Caco-2 (cell line): ENCODE measurements at regions of chr17 and their contacts with region 1.

Region 1: GRCh38 chr17:49861150-49861892 is 13.5 kb upstream of the TAC4 start:
- DNase-seq: peak; percentile 91 to 95
- H3K4me3 ChIP-seq: no peak overlapping the region
- H3K4me3 Mint-ChIP-seq: no peak overlapping the region
- H3K27ac Mint-ChIP-seq: no peak overlapping the region
- H3K4me1 ChIP-seq: peaks cover 26% of the 10 kb centered on the region
- H3K4me1 Mint-ChIP-seq: peaks cover 20% of the 10 kb centered on the region
- H3K27me3 ChIP-seq: no peaks in the 10 kb centered on the region
- H3K27me3 Mint-ChIP-seq: no peaks in the 10 kb centered on the region
- CTCF ChIP-seq: peak; percentile 99 to 100

Region 2: GRCh38 chr17:49637050-49637449 is 224.3 kb before region 1 on chr17:
- CTCF ChIA-PET with region 1: no interaction called
- POLR2A ChIA-PET with region 1: no interaction called
- intact Hi-C with region 1: no loop called
- DNase-seq: no peak
- H3K4me3 ChIP-seq: no peak overlapping the region
- H3K4me3 Mint-ChIP-seq: no peak overlapping the region
- H3K27ac Mint-ChIP-seq: no peak overlapping the region
- H3K4me1 ChIP-seq: peaks cover 5% of the 10 kb centered on the region; the same call in 1 of the 2 replicates
- H3K4me1 Mint-ChIP-seq: peaks cover under 1% of the 10 kb centered on the region
- H3K27me3 ChIP-seq: no peaks in the 10 kb centered on the region
- H3K27me3 Mint-ChIP-seq: no peaks in the 10 kb centered on the region
- CTCF ChIP-seq: no peak

Region 3: GRCh38 chr17:49880291-49881053 is 19.2 kb after region 1 on chr17:
- CTCF ChIA-PET with region 1: interaction called, 14 read pairs
- POLR2A ChIA-PET with region 1: interaction called, 6 read pairs
- intact Hi-C with region 1: loop called (anchors 1 kb)
- DNase-seq: peak; percentile 98 to 100
- H3K4me3 ChIP-seq: peak overlapping the region; percentile 4; the same call in 1 of the 2 replicates
- H3K4me3 Mint-ChIP-seq: peak overlapping the region; percentile 63
- H3K27ac Mint-ChIP-seq: peak overlapping the region; percentile 83
- H3K4me1 ChIP-seq: peaks cover 57% of the 10 kb centered on the region
- H3K4me1 Mint-ChIP-seq: peaks cover 39% of the 10 kb centered on the region
- H3K27me3 ChIP-seq: no peaks in the 10 kb centered on the region
- H3K27me3 Mint-ChIP-seq: no peaks in the 10 kb centered on the region
- CTCF ChIP-seq: peak; percentile 100

Region 4: GRCh38 chr17:49887086-49888028 is 26.0 kb after region 1 on chr17:
- CTCF ChIA-PET with region 1: interaction called, 10 read pairs
- POLR2A ChIA-PET with region 1: no interaction called
- intact Hi-C with region 1: loop called (anchors 1 kb)
- DNase-seq: peak; percentile 100
- H3K4me3 ChIP-seq: no peak overlapping the region
- H3K4me3 Mint-ChIP-seq: peak overlapping the region; percentile 59
- H3K27ac Mint-ChIP-seq: peak overlapping the region; percentile 96
- H3K4me1 ChIP-seq: peaks cover 88% of the 10 kb centered on the region
- H3K4me1 Mint-ChIP-seq: peaks cover 75% of the 10 kb centered on the region
- H3K27me3 ChIP-seq: no peaks in the 10 kb centered on the region
- H3K27me3 Mint-ChIP-seq: no peaks in the 10 kb centered on the region
- CTCF ChIP-seq: no peak

Region 5: GRCh38 chr17:49997791-49998703 is 136.7 kb after region 1 on chr17:
- CTCF ChIA-PET with region 1: interaction called, 16 read pairs
- POLR2A ChIA-PET with region 1: no interaction called
- intact Hi-C with region 1: loop called (anchors 1 kb)
- DNase-seq: peak; percentile 76 to 82
- H3K4me3 ChIP-seq: no peak overlapping the region
- H3K4me3 Mint-ChIP-seq: peak overlapping the region; percentile 31
- H3K27ac Mint-ChIP-seq: no peak overlapping the region
- H3K4me1 ChIP-seq: no peaks in the 10 kb centered on the region
- H3K4me1 Mint-ChIP-seq: peaks cover 14% of the 10 kb centered on the region
- H3K27me3 ChIP-seq: no peaks in the 10 kb centered on the region
- H3K27me3 Mint-ChIP-seq: peaks cover 14% of the 10 kb centered on the region
- CTCF ChIP-seq: peak; percentile 63 to 72

Region 6: DNA sequence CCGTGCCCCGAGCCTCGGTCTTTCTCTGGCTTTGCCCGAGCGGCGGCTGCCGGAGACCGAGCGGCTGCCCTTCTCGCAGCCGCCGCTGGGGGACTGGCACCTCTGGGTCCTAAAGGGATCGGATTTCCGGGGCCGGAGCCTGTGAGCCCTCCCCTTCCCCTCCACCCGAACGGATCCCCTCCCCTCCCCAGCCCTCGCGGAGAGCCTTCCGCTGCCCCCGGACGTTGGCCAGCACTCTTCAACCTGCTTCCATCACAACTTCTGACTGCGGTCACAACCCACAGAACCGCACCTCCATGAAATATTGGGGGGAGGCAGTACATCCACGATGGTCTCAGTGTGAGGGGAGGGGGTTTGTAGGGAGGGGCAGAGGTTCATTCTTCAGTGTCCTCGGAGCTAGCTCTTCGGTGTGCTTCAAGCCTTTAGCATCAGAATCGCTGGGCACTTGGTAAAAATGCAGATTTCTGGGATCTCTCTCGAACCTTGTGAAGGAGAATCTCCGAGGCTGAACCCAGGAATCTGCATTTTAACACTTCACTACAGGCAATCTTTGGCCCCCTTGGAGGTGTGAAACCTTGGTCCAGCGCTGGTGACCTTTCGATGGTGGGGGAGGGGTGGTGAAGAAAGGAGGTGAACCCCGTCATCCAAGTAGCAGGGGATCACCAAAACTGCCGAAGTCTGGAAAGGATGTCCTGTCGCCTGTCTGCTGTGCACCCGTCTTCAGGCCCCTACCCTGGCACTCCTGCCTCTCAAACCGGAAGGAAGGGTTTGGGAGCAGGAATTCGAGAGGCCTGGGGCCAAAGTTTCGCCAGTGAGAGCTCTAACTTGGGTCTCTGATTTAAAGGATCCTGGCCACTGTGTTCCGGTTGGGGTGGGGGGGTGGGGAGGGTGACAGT is 290.0 kb after region 1 on chr17:
- CTCF ChIA-PET with region 1: interaction called, 12 read pairs
- POLR2A ChIA-PET with region 1: no interaction called
- intact Hi-C with region 1: no loop called
- DNase-seq: peak; percentile 97 to 98
- H3K4me3 ChIP-seq: peak overlapping the region; percentile 69
- H3K4me3 Mint-ChIP-seq: peak overlapping the region; percentile 81
- H3K27ac Mint-ChIP-seq: peak overlapping the region; percentile 69
- H3K4me1 ChIP-seq: peaks cover 32% of the 10 kb centered on the region
- H3K4me1 Mint-ChIP-seq: peaks cover 39% of the 10 kb centered on the region
- H3K27me3 ChIP-seq: no peaks in the 10 kb centered on the region
- H3K27me3 Mint-ChIP-seq: no peaks in the 10 kb centered on the region
- CTCF ChIP-seq: peak; percentile 97 to 98

Region 7: GRCh38 chr17:50161023-50161910 is 299.9 kb after region 1 on chr17:
- CTCF ChIA-PET with region 1: interaction called, 5 read pairs
- POLR2A ChIA-PET with region 1: no interaction called
- intact Hi-C with region 1: loop called (anchors 1 kb)
- DNase-seq: peak; percentile 96 to 100
- H3K4me3 ChIP-seq: peak overlapping the region; percentile 48
- H3K4me3 Mint-ChIP-seq: peak overlapping the region; percentile 67
- H3K27ac Mint-ChIP-seq: peak overlapping the region; percentile 2
- H3K4me1 ChIP-seq: peaks cover 17% of the 10 kb centered on the region
- H3K4me1 Mint-ChIP-seq: peaks cover 13% of the 10 kb centered on the region
- H3K27me3 ChIP-seq: no peaks in the 10 kb centered on the region
- H3K27me3 Mint-ChIP-seq: peaks cover 9% of the 10 kb centered on the region
- CTCF ChIP-seq: peak; percentile 99 to 100

Region 8: DNA sequence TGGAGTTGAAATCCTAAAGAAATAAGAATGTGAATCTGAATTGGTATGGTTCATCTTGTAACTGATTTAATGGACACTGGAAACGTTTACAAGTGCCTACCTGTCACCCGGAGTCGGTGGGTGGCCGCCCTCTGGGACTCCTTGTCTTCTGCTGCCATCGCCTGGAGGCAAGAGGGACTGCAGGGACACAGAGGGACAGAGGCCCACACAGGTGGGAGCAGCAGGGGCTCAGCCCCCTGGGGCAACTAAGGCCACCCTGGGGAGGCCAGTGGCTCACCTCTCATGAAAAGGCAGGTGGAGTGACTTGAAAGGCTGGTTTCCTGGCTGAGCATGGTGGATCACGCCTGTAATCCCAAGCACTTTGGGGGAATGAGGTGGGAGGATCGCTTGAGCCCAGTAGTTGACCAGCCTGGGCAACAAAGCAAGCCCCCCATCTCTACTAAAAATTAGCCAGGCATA is 436.1 kb after region 1 on chr17:
- CTCF ChIA-PET with region 1: no interaction called
- POLR2A ChIA-PET with region 1: no interaction called
- intact Hi-C with region 1: loop called (anchors 1 kb)
- DNase-seq: peak; percentile 95 to 98
- H3K4me3 ChIP-seq: no peak overlapping the region
- H3K4me3 Mint-ChIP-seq: no peak overlapping the region
- H3K27ac Mint-ChIP-seq: peak overlapping the region; percentile 13
- H3K4me1 ChIP-seq: peaks cover 5% of the 10 kb centered on the region; the same call in 1 of the 2 replicates
- H3K4me1 Mint-ChIP-seq: peaks cover 10% of the 10 kb centered on the region
- H3K27me3 ChIP-seq: no peaks in the 10 kb centered on the region
- H3K27me3 Mint-ChIP-seq: no peaks in the 10 kb centered on the region
- CTCF ChIP-seq: peak; percentile 100